ENCODE measurements at regions of chr22 and their contacts with region 1.

Region 1: GRCh38 chr22:30444632-30445437 is 19.3 kb downstream of the MTFP1 start:
- DNase-seq: no peak
- H3K4me3 ChIP-seq: no peak overlapping the region
- CTCF ChIP-seq: peak; percentile 75

Region 2: DNA sequence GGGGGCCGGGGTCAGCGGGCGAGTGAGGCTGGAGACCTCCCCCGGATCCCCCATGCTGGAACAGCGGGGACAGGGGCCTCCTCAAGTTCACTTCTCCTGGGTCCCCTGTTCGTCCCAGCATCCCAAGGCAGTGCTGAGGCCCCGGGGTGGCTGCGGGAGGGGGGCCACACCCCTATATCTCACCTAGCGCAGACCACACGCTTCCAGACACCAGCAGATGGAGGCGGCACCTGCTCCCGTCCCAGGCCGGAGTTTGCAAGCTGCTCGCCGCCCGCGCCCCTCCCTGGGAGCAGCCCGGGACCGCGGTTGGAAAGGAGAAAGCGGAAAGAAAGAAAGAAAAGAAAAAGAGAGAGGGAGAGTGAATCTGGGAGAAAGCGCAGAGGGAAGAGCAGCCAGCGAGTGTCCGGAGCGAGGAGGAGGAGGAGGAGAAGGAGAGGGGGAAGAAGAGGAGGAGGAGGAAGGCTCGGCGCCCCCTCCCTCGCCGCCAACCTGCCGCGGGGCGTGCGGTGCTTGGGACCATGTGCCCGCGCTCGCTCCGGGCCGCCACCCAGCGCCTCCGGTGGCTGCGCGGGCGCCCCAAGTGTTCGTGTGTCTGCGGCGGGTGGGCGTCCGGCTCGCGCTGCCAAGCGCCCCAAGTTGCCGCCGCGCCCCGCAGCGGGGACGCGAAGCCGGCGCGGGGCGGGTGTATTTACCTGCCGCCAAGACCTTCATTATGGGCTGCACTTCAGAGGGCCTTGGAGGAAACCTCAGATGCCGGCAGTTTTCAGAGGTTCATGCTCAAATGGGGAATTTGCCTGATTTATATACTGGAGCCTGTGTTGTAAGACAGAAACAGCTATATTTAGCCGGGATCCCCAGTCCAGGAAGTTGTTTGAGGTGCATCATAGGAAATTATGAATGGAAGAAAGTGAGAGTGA is 198.6 kb before region 1 on chr22 and contains the start of gene LIF:
- CTCF ChIA-PET with region 1: no interaction called
- POLR2A ChIA-PET with region 1: no interaction called
- DNase-seq: no peak
- H3K4me3 ChIP-seq: peak within 1 kb of the TSS; percentile 75
- CTCF ChIP-seq: peak; percentile 30

Region 3: DNA sequence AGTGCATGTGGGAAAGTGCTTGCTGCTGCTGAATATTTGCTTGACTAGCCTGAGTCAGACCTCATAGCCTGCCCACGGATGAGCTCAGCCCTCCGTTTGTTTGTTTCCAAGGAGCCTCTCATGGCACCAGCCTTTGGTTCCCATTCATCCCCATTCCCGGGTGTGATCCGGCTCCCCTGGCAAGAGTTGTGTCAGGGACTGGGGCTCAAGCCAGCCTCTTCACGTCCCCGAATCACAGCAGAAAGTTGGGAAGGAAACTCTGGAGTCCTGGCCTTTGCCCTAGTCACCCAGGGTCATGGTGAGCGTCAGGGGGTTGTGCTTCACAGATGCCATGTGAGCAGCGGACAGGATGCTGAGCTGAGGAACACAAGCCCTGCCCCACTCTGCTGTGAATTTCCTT is 13.1 kb after region 1 on chr22:
- CTCF ChIA-PET with region 1: interaction called, 16 read pairs
- POLR2A ChIA-PET with region 1: no interaction called
- DNase-seq: no peak
- H3K4me3 ChIP-seq: no peak overlapping the region
- CTCF ChIP-seq: no peak

Region 4: DNA sequence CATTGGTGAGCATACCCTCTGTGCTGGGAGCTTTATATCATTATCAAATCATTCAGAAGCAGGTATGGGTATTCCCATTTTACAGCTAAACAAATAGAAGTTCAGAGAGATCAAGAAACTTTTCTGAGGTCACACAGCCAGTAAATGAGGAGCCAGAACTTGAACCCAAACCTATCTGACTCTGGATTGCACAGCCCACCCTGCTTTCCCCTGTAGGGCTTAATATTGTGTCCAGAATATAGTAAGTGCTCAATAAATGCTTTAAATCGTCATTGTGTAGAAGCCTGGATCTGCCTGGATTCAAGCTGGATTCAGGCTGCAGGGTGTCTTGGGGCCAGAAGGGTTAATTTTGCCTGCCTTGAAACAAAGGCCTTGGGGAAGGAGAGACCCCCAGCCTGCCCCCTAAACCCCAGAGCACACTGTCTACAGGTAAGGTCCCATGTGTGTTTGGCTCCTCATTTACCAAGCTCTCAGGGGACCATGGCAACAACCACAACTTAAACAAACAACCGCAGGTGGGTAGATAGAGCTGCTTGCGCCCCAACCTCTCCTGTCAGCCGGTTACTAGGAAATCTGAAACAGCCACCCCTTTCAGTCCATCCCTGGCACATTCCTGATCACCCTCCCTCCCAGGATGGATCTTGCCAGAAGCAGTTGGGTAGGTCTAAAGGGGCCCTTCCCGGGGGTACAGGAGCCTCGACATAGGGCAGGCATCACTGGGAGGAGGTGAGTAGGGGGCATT is 30.0 kb after region 1 on chr22:
- CTCF ChIA-PET with region 1: interaction called, 10 read pairs
- POLR2A ChIA-PET with region 1: no interaction called
- DNase-seq: no peak
- H3K4me3 ChIP-seq: no peak overlapping the region
- CTCF ChIP-seq: no peak

Region 5: GRCh38 chr22:31089160-31090100 is 644.6 kb after region 1 on chr22:
- CTCF ChIA-PET with region 1: no interaction called
- POLR2A ChIA-PET with region 1: no interaction called
- DNase-seq: no peak
- H3K4me3 ChIP-seq: no peak overlapping the region
- CTCF ChIP-seq: peak; percentile 88